ENCODE measurements at regions of chr5 and their contacts with region 1.

Region 1: GRCh38 chr5:177390363-177391300 is 6.4 kb downstream of the SLC34A1 start:
- DNase-seq: peak; percentile 78 to 93 (median 83)
- ATAC-seq: peak; percentile 94
- H3K4me3 ChIP-seq: no peak overlapping the region
- H3K4me1 ChIP-seq: no peaks in the 10 kb centered on the region
- CTCF ChIP-seq: peak; percentile 90

Region 2: DNA sequence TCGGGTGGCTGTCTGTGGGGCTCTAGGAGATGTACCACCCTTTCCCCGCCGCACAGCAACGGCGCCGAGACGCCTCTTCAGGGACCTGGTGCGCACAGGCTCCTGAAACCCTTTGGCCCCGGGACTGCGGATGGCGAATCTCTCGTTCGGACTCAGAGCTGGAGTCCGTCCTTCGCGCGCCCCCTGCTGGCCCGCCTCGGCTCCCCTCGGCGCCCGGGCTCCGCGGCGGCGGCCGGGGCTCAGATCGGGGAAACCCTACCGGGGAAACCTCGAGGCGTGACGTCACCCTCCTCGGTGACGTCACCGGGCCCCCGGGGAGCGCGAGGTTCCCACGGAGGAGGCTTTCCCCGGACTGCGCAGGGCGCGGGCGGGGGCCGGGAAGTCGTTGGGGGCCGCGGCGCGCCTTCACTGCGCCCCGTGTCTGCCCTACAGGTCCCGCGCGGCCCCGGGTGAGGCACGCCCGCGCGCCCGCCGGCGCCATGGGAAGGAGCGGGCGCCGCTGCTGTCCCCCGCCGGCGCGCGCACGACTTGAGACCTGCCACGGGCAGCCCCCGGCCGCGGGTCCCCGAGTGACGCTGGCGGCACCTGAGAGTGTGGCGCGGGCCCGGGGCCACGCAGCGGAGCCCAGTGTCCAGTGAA is 63.9 kb after region 1 on chr5:
- intact Hi-C with region 1: loop called (anchors 5 kb)
- DNase-seq: peak; percentile 94 to 98 (median 97)
- ATAC-seq: peak; percentile 76
- H3K4me3 ChIP-seq: peak overlapping the region; percentile 36
- H3K4me1 ChIP-seq: peaks cover 13% of the 10 kb centered on the region
- CTCF ChIP-seq: peak; percentile 90

Region 3: DNA sequence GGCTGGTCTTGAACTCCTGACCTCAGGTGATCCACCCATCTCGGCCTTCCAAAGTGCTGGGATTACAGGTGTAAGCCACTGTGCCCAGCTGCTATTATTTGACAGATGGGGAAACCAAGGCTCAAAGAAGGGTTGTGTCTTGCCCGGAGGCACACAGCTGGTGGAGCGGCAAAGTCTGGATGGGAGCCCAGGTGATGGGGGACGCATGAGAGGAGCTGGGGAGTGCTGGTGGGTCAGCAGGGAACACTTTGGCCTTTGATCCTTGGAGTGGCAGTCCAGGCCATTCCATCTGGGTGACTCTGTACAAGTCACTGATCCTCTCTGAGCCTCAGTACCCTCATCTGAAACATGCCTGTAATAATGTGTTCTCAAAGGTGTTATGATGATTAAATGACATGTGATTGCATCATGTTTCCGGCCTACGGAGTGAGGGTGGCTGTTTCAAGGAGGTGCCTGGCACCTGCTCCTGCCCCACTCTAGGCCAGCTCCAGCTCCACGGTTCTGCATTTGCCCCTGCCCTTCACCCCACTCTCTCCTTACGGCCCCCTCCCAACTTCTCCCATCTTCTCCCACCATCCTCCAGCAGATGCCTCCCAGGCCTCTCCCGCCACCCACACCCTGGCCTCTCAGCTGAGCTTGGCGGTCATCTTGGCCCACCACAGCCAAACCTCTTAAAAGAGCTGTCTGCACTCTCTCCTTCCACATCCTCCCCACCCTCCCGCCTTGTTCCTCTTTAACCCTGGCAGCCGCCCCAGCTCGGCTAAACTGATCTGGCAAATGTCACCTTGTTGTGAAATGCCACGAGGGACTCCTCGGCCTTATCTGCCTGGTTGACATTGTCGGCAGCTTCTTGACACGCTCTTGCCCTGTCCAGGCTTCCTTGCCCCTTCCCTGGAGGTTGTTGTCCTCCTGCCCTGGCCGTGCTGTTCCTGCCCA is 88.3 kb after region 1 on chr5:
- intact Hi-C with region 1: no loop called
- DNase-seq: peak; percentile 59 to 73 (median 61)
- ATAC-seq: peak; percentile 53
- H3K4me3 ChIP-seq: no peak overlapping the region
- H3K4me1 ChIP-seq: peaks cover 3% of the 10 kb centered on the region
- CTCF ChIP-seq: no peak

Region 4: GRCh38 chr5:177500685-177501522 is 110.3 kb after region 1 on chr5:
- intact Hi-C with region 1: loop called in 1 of 2 experiments (anchors 5 kb)
- DNase-seq: peak; percentile 89 to 97 (median 92)
- ATAC-seq: peak; percentile 43
- H3K4me3 ChIP-seq: no peak overlapping the region
- H3K4me1 ChIP-seq: peaks cover 12% of the 10 kb centered on the region
- CTCF ChIP-seq: peak; percentile 83

Region 5: DNA sequence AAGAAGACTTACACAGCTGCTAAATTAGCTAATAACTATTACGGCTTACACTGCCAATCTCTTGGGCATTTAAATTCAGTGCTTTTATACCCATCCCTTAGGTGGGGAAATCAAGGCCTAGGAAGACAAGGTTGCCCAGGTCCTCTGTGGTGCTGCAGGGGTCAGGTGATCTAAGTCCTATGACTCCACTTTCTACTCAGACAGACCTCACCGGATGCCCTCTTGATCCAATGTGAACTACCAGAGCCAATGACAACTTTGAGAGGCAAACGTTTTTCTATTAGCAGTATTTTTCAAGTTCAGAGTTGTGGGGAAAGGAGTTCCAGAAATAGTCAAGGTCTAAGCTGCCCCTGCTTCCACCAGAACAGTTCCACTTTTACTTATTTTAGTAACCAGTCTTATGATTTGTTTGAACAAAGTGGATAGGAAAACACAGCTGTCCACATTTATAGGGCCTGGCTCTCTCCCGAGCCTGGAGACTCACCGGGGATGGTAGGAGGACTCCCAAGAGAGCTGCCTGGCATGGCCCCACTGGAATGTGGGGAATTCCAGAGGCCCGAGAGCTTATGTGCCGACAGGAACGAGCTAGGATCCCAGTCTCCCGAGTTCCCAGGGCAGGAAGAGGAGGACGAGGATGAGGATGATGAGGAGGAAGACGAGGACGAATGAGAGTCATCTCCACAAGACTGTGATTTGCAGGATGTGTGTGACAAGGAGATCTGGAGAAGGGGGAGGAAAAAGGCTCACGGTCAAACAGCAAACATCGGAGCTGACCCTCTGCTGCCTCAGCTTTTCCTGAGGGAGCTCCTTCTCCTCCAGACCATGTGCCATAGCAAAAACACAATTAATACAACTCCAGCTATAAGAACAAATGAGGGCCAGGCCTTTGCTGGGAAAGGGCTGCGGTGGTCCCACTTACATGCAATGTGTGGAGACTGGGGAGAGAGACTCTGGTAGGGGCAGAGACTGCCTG is 147.0 kb after region 1 on chr5:
- intact Hi-C with region 1: no loop called
- DNase-seq: peak in 1 of 3 donors; percentile 29
- ATAC-seq: peak; percentile 86
- H3K4me3 ChIP-seq: no peak overlapping the region
- H3K4me1 ChIP-seq: no peaks in the 10 kb centered on the region
- CTCF ChIP-seq: no peak